ENCODE measurements at regions of chr5 and their contacts with region 1.

Region 1: DNA sequence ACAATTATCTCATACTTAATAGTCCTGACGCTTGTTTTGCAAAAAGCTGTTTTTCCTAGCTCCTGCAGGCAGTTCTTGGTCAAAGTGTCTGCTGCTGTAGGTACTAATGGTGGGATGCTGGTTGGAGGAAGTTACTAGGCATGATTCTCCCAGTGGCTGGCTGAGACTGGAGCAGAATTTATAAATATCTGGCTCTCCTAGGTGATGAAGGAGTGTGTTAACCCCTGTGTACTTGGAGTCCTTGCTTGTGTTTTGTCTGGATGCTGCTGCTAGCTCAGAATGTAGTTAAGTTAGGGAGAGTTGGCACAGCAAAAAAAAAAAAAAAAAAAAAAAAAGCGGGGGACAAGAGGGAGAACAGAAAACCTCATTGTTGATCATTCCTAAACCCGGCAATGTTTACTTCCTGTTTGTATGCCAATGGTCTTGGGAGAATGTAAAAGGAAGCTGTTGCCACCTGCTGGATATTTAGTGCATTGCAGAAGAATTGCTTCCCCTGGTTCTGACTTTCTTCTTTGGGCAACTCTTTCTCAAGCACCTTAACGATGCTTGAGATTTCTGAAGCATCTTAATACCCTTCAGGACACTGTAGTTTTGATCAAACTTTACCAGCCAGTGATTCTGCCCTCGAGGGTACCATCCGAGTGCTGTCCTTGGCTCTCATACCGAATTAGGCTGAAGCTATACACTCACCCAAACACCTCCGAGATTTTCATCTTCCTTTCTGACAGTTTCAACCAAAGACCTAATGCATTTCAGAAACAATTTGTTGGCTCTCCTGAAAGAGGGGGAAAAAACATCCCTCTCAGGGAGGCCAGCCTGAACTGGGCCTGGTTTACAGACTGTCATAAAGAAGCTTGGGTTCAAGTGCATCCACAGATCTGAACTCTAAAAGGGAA is 71.7 kb upstream of the WWC1 start:
- DNase-seq: peak; percentile 42
- H3K4me3 ChIP-seq: peak overlapping the region; percentile 34; the same call in 1 of the 2 replicates
- H3K27ac ChIP-seq: no peak overlapping the region
- H3K27me3 ChIP-seq: peaks cover 4% of the 10 kb centered on the region
- CTCF ChIP-seq: peak; percentile 94

Region 2: GRCh38 chr5:167582283-167582682 is 637.5 kb before region 1 on chr5:
- CTCF ChIA-PET with region 1: interaction called, 28 read pairs
- POLR2A ChIA-PET with region 1: interaction called, 3 read pairs
- DNase-seq: no peak
- H3K4me3 ChIP-seq: no peak overlapping the region
- H3K27ac ChIP-seq: no peak overlapping the region
- H3K27me3 ChIP-seq: peaks cover 3% of the 10 kb centered on the region
- CTCF ChIP-seq: peak; percentile 21; the same call in 1 of the 2 replicates

Region 3: GRCh38 chr5:167723254-167723871 is 496.4 kb before region 1 on chr5:
- CTCF ChIA-PET with region 1: interaction called, 15 read pairs
- POLR2A ChIA-PET with region 1: no interaction called
- DNase-seq: peak; percentile 46
- H3K4me3 ChIP-seq: no peak overlapping the region
- H3K27ac ChIP-seq: no peak overlapping the region
- H3K27me3 ChIP-seq: no peaks in the 10 kb centered on the region
- CTCF ChIP-seq: peak; percentile 92

Region 4: DNA sequence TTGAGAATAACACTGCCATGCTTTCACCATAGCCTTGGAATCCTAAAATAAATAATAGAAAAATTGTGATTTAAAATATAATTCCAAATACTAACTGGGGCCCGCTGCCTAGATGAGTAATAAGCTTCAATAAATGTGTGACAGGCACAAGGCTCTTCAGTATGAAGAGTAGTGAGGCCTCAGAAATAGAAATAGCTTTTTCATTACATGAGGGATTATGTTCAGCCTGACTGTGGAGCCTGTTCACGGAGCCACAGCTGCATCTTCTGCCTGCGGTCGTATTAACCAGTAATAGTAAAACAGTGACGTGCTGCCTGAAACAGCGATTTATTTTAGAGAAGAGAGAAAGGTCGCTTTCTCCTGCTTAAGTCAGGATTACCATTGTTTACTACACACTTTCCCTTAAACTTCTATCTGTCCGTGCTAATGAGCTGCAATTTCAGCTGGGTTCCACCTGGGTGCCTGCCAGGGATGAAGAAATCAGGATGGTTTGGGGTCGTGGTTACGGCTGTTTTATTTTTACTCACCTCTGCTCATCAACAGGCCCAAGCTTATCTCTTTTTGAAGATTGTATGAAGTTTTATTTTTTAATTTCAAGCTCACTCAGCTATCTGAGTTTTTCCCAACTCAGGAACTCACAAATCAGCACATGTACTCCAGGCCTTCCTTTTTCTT is 213.2 kb before region 1 on chr5:
- CTCF ChIA-PET with region 1: no interaction called
- POLR2A ChIA-PET with region 1: no interaction called
- DNase-seq: no peak
- H3K4me3 ChIP-seq: no peak overlapping the region
- H3K27ac ChIP-seq: no peak overlapping the region
- H3K27me3 ChIP-seq: peaks cover 5% of the 10 kb centered on the region
- CTCF ChIP-seq: no peak

Region 5: DNA sequence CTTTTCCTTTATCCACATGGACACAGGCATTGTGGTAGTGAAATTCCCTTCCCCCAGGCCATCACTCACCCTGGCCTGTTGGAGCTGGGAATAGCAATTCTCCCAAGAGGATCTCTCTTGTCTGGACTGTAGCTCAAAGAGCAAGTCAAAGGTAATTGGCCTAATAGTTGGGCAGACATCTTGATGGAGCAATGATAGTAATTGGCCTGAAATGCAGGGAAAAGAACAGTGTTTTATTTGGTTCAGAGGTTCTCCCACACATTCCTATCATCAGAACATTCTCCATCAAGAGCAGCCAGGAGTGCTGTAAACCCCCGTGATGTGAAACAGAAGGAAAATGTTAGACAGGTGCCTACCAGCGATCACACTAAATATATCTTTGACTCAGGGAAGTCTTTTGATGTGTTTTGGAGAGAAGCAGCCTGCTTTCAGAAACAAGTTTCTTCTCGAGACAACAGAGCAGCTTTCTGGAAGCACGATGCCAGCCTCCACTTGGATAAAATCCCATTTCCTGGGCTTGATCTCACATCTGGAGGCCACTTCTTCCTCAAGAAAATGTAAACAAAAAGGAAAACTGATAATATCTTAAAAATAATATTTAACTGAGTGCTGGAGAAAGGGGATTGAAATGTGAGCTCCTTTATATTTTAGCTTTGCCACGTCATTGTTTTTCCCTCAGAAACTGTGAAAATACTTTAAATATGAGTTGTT is 126.4 kb before region 1 on chr5:
- CTCF ChIA-PET with region 1: no interaction called
- POLR2A ChIA-PET with region 1: no interaction called
- DNase-seq: no peak
- H3K4me3 ChIP-seq: no peak overlapping the region
- H3K27ac ChIP-seq: no peak overlapping the region
- H3K27me3 ChIP-seq: peaks cover 2% of the 10 kb centered on the region
- CTCF ChIP-seq: no peak

Region 6: GRCh38 chr5:168193493-168194250 is 26.1 kb before region 1 on chr5:
- CTCF ChIA-PET with region 1: interaction called, 14 read pairs
- POLR2A ChIA-PET with region 1: no interaction called
- DNase-seq: no peak
- H3K4me3 ChIP-seq: no peak overlapping the region
- H3K27ac ChIP-seq: no peak overlapping the region
- H3K27me3 ChIP-seq: no peaks in the 10 kb centered on the region
- CTCF ChIP-seq: no peak

Region 7: GRCh38 chr5:168314735-168315418 is 95.1 kb after region 1 on chr5:
- CTCF ChIA-PET with region 1: no interaction called
- POLR2A ChIA-PET with region 1: no interaction called
- DNase-seq: peak; percentile 84
- H3K4me3 ChIP-seq: no peak overlapping the region
- H3K27ac ChIP-seq: peak overlapping the region; percentile 39
- H3K27me3 ChIP-seq: no peaks in the 10 kb centered on the region
- CTCF ChIP-seq: 0 out of 2 replicates have a peak, but pooled peaks have one; percentile 2

Region 8: GRCh38 chr5:168472329-168472728 is 252.6 kb after region 1 on chr5:
- CTCF ChIA-PET with region 1: no interaction called
- POLR2A ChIA-PET with region 1: interaction called, 11 read pairs
- DNase-seq: peak; percentile 86
- H3K4me3 ChIP-seq: no peak overlapping the region
- H3K27ac ChIP-seq: peak overlapping the region; percentile 74
- H3K27me3 ChIP-seq: no peaks in the 10 kb centered on the region
- CTCF ChIP-seq: peak; percentile 53

Measured in AG04450 (cell line).